ENCODE measurements at regions of chr19 and their contacts with region 1.

Region 1: DNA sequence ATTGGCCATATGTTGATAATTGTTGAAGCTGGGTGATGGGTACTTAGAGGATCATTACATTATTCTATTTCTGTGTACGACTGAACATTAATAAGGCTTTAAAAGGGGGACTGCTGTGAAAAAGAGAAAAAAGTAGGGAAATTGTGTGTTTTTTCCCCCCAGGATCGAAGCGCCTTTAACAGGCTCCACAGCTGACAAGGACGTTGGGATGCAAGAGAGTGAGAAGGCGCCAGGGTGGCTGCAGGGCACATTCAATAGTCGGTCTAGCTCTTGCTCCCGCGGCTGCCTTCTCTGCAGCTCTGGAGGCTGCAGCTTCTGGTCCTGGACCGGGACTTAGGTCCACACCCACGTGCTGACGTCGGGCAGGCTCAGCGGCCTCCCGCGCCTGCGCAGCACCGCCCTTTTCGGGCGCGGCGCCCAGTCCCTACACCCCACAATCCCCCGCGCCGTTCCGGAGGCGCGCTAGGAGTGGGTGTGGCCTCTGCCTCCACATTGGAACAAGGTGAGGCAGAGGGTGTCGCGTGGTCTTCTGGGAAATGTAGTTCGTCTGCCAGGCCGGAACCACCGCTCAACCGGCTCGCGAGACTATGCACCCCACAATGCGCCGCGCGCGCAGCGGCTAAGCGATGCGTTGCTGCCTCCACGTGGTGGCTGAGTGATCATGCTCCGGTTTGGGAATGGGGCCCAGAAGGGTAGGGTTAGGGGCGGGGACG is 4.9 kb upstream of the LRFN3 start:
- DNase-seq: peak; percentile 99 to 100 (median 99)
- ATAC-seq: peak; percentile 99 to 100 (median 100)
- H3K4me3 ChIP-seq: peak overlapping the region in 9 of 12 donors; percentile 2 to 42 (median 34)
- H3K27ac ChIP-seq: peak overlapping the region in 11 of 12 donors; percentile 50 to 88 (median 70)
- H3K4me1 ChIP-seq: peaks cover 0 to 35% (median 14%) of the 10 kb centered on the region in 12 donors
- H3K27me3 ChIP-seq: peaks cover 0 to 5% (median 0%) of the 10 kb centered on the region in 9 donors
- CTCF ChIP-seq: peak; percentile 77 to 98 (median 86)
- POLR2A ChIP-seq: peak; percentile 31 to 92

Region 2: DNA sequence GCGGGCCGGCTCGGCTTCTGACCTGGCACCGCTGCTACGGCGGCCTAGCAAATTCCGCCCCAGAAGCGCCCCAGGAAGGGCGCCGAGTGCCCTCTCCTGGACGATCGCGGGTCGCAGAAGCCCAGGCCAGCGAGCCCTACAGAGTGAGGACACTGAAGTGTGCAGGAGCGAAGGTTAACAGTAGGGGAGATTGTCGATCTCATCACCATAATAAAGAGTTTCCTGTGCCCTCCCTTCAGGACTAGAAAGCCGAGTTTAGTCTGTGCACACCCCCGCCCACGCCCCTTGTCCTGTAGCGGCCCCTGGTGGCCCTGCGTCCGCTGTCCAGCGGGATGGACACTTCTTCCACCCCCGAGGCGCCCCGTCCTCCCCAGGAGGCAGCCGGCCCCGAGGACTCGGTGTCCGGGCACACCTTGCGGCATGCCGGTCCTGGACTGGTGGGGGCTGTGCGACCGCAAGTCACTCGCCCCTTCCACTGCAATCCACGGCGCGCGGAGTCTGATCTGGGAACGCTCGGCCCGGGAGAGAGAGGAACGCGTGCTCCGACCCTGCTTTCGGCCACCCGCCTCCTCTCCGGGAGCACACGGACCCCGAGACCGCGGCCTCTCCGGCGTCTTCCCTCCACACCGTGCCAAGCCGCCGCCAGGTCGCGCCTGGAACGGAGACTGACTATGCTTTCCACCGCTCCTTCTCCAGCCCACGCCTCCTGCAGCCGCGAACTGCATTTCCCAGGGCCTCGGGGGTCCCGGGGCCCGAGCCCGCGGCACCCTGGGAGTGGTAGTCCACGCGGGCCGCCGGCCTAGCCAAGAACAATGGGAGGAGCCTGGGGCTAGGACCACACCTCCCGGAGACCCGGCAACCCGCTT is 214.3 kb before region 1 on chr19:
- intact Hi-C with region 1: loop called in 5 of 10 experiments (anchors 1 to 10 kb)
- DNase-seq: peak; percentile 90 to 98 (median 96)
- ATAC-seq: peak; percentile 93 to 96 (median 95)
- H3K4me3 ChIP-seq: peak overlapping the region; percentile 66 to 100 (median 88)
- H3K27ac ChIP-seq: peak overlapping the region; percentile 87 to 98 (median 92)
- H3K4me1 ChIP-seq: peaks cover 3 to 39% (median 22%) of the 10 kb centered on the region in 12 donors
- H3K27me3 ChIP-seq: no peaks in the 10 kb centered on the region
- CTCF ChIP-seq: peak; percentile 86 to 98 (median 91)
- POLR2A ChIP-seq: peak in 1 of 2 donors; percentile 45

Region 3: GRCh38 chr19:35748106-35749020 is 183.0 kb before region 1 on chr19 and contains the start of gene LIN37:
- intact Hi-C with region 1: loop called in 6 of 10 experiments (anchors 1 to 10 kb)
- DNase-seq: peak; percentile 98 to 100 (median 99)
- ATAC-seq: peak; percentile 83 to 90 (median 88)
- H3K4me3 ChIP-seq: peak within 1 kb of the TSS; percentile 64 to 95 (median 86)
- H3K27ac ChIP-seq: peak within 1 kb of the TSS in 11 of 12 donors; percentile 64 to 94 (median 80)
- H3K4me1 ChIP-seq: peaks cover 10 to 54% (median 32%) of the 10 kb centered on the region in 12 donors
- H3K27me3 ChIP-seq: no peaks in the 10 kb centered on the region
- CTCF ChIP-seq: peak in 6 of 12 donors; percentile 13 to 54 (median 20)
- POLR2A ChIP-seq: peak; percentile 94 to 98
- total RNA-seq, gene LIN37: 3.7 to 12.2 (median 7.6) TPM

Region 4: GRCh38 chr19:35775298-35776110 is 155.8 kb before region 1 on chr19 and contains the start of gene ARHGAP33:
- intact Hi-C with region 1: loop called in 1 of 10 experiments (anchors 10 kb)
- DNase-seq: peak; percentile 99 to 100 (median 99)
- ATAC-seq: peak; percentile 98 to 99 (median 98)
- H3K4me3 ChIP-seq: peak within 1 kb of the TSS; percentile 68 to 99 (median 92)
- H3K27ac ChIP-seq: peak within 1 kb of the TSS in 6 of 12 donors; percentile 1 to 77 (median 44)
- H3K4me1 ChIP-seq: peaks cover 0 to 17% (median 5%) of the 10 kb centered on the region in 12 donors
- H3K27me3 ChIP-seq: no peaks in the 10 kb centered on the region
- CTCF ChIP-seq: no peak
- POLR2A ChIP-seq: peak in 1 of 2 donors; percentile 27
- total RNA-seq, gene ARHGAP33: 0.50 to 7.8 (median 5.7) TPM

Region 5: DNA sequence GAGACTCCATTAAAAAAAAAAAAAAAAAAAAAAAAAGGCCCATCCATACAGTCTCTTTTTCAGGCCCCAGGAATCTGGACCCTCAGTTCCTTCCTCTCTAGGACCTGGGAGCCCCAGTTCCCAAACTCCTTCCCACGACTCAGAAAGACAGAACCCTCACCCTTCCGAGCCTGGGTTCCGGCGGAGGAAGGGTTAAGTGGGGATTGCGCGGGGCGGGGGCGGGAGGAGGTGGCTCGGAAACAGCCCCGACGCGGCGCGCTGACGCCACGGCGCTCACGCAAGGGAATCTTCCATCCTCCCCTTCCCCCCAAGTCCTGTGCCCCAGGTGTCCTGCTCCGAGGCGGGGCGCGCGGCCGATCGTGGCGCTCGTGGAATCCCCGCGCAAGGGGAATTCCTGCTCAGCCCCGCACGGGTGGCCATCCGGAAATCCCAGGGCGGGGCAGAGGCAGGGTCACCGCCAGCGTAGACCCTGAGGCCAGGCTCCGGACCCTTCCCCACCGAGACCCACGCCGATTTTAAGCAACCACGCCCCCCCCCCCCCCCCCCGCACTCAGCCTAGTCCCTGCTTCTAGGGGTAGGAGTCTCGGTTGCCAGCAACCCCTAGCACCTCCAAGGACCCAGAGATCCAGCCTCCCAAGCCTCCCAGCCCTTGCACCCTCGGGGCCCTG is 31.6 kb before region 1 on chr19:
- intact Hi-C with region 1: loop called in 5 of 10 experiments (anchors 1 to 5 kb)
- DNase-seq: peak; percentile 85 to 90 (median 88)
- ATAC-seq: peak; percentile 79 to 92 (median 84)
- H3K4me3 ChIP-seq: peak overlapping the region; percentile 32 to 80 (median 68)
- H3K27ac ChIP-seq: peak overlapping the region; percentile 12 to 89 (median 78)
- H3K4me1 ChIP-seq: peaks cover 0 to 59% (median 10%) of the 10 kb centered on the region in 12 donors
- H3K27me3 ChIP-seq: no peaks in the 10 kb centered on the region
- CTCF ChIP-seq: no peak
- POLR2A ChIP-seq: peak in 1 of 2 donors; percentile 37

Measured in heart left ventricle (tissue), 16 donors.